MCF 10A (cell line): ENCODE measurements at regions of chr18 and their contacts with region 1.

Region 1: DNA sequence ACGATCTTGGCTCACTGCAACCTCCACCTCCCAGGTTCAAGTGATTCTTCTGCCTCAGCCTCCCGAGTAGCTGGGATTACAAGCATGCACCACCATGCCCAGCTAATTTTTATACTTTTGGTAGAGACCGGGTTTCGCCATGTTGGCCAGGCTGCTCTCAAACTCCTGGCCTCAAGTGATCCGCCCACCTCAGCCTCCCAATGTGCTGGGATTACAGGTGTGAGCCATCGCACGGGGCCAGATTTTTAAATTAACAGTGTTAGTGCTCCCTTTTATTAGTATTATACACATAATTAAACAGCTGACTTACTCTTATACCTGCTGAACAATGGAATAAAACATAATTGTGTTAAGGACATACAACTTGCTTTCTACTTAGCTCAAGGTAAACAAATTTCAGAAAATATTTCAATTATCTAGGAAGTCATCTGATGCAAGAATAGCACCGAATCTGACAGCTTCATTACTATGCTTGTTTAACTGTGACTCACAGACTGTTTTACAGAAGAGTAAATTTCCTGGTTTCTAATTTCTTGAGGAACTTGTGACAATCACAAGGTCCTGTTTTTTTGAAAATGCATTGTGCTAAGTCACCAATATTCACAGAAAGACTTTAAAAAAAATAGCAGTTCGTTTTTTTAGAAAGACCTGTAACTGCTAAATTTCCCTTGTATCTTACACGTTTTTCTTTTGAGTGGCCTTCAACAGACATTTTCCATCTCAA is 51.2 kb downstream of the SPIRE1 start:
- DNase-seq: peak; percentile 69
- H3K4me3 Mint-ChIP-seq: peak overlapping the region; percentile 58
- H3K27ac Mint-ChIP-seq: peak overlapping the region; percentile 99
- H3K4me1 Mint-ChIP-seq: peaks cover 54% of the 10 kb centered on the region
- H3K27me3 Mint-ChIP-seq: no peaks in the 10 kb centered on the region
- CTCF ChIP-seq: no peak

Region 2: DNA sequence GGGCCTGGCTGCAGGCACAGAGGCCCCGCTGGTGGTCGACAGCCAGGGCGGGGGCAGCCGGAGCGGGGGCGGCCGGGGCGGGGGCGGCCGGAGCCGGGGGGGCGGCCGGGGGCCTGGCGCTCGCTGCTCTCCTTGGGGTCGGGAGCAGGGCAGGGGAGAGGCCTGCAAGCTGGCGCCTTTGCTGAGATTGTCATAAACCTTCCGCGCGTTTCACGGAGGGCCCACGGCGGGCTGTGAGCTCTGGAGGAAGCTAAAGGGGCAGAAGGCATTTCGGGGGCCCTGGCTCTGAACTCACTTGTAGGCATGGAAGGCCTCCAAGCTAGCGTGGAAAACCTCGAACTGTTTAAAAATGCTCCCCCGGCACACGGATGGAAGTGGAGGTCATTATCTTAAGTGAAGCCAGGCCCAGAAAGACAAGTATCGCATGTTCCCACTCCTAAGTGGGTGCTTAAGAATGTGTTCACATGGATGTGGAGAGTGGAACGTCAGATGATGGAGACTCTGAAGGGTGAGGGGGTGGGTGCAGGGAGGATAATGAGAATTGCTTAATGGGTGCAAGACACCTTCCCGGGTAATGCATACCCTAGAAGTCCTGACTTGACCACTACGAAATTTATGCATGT is 198.4 kb before region 1 on chr18:
- CTCF ChIA-PET with region 1: interaction called, 5 read pairs
- POLR2A ChIA-PET with region 1: interaction called, 5 read pairs
- intact Hi-C with region 1: loop called (anchors 5 kb)
- DNase-seq: peak; percentile 39
- H3K4me3 Mint-ChIP-seq: peak overlapping the region; percentile 80
- H3K27ac Mint-ChIP-seq: peak overlapping the region; percentile 74
- H3K4me1 Mint-ChIP-seq: peaks cover 20% of the 10 kb centered on the region
- H3K27me3 Mint-ChIP-seq: peaks cover 18% of the 10 kb centered on the region
- CTCF ChIP-seq: no peak

Region 3: DNA sequence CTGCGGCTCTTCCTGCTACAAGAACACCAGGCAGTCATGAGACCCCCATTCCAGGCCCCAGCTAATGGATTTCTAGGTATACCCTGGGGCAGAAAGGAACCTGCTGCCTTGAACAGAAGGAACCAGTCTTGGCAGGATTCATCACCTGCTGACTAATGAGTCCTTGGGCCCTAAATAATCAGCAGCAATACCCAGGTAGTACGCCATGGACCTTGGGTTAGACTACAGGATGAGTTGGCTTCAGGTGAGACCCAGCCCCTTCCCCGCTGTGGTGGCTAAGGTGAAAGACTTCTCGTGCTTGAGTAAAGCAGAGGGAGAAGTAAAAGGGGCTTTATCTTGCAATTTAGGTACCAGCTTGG is 53.9 kb before region 1 on chr18:
- CTCF ChIA-PET with region 1: interaction called, 3 read pairs
- POLR2A ChIA-PET with region 1: interaction called, 40 read pairs
- intact Hi-C with region 1: no loop called
- DNase-seq: peak; percentile 88
- H3K4me3 Mint-ChIP-seq: peak overlapping the region; percentile 12
- H3K27ac Mint-ChIP-seq: peak overlapping the region; percentile 89
- H3K4me1 Mint-ChIP-seq: peaks cover 40% of the 10 kb centered on the region
- H3K27me3 Mint-ChIP-seq: no peaks in the 10 kb centered on the region
- CTCF ChIP-seq: no peak

Region 4: DNA sequence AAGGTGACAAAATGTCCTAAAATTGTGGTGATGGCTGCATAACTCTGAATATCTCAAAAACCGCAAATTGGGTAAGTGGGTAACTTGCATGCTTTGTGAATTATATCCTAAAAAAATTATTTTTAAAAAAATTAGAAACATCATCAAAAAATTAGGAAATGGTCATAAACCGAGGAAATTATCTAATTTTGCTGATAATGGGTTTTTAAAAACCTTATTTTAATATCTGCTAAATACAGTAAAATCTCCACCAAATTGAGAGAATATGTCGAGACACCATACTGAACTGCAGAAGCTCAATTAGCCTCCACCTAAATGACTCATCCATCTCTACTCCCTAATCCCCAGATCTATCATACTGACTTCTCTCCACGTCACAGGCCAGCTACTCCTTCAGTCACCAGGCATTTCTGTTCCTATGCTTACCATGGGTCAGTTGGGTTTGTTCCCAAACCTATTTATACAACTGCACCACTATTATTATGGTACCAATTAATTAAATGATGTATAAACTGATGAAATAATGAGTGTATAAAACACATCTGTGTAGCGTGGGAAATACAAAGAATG is 15.1 kb after region 1 on chr18:
- CTCF ChIA-PET with region 1: interaction called, 3 read pairs
- POLR2A ChIA-PET with region 1: interaction called, 12 read pairs
- intact Hi-C with region 1: no loop called
- DNase-seq: peak; percentile 58
- H3K4me3 Mint-ChIP-seq: no peak overlapping the region
- H3K27ac Mint-ChIP-seq: no peak overlapping the region
- H3K4me1 Mint-ChIP-seq: peaks cover 18% of the 10 kb centered on the region
- H3K27me3 Mint-ChIP-seq: no peaks in the 10 kb centered on the region
- CTCF ChIP-seq: no peak

Region 5: DNA sequence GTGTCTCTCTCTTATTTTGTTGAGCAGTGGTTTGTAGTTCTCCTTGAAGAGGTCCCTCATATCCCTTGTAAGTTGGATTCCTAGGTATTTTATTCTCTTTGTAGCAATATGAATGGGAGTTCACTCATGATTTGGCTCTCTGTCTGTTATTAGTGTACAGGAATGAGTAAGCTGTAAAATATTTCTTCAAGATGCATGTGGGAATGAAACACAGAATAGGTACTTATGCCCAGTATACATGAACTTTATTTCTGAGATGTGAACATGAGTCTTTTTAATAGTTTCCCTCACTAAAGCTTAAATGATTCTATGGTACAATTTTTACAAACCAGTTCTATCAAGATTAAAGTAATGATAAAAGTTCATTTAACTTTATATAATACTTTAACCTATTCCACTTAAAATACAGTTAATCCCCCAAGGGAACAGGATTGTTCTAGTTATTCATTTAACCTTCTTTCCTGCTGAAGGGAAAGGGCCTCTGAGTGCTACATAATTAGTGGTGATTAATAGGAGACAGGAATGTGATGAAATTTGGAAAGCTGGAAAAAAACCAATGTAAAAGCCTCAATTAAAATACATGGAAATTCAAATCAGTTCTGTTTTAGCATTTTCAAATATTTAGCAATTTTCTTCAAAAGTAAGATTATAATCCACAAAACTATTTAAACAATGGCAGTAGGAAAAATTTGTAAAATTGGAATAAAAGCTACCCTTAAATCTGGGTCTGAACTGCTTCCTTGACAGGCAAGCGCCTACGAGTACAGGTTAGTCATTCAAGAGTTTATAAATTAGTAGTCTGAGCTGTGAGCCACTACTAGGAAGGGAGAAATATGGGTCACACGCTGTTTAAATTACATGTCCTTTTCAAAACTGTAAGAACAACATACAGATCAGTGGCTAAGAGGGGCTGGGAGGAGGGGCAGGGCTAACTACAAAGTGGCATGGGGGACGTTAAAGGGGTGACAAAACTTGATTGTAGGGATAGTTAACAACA is 22.2 kb after region 1 on chr18:
- CTCF ChIA-PET with region 1: interaction called, 3 read pairs
- POLR2A ChIA-PET with region 1: interaction called, 44 read pairs
- intact Hi-C with region 1: no loop called
- DNase-seq: peak; percentile 52
- H3K4me3 Mint-ChIP-seq: no peak overlapping the region
- H3K27ac Mint-ChIP-seq: peak overlapping the region; percentile 71
- H3K4me1 Mint-ChIP-seq: peaks cover 26% of the 10 kb centered on the region
- H3K27me3 Mint-ChIP-seq: no peaks in the 10 kb centered on the region
- CTCF ChIP-seq: no peak

Region 6: GRCh38 chr18:12639990-12640880 is 33.5 kb after region 1 on chr18:
- CTCF ChIA-PET with region 1: interaction called, 4 read pairs
- POLR2A ChIA-PET with region 1: interaction called, 52 read pairs
- intact Hi-C with region 1: loop called (anchors 5 kb)
- DNase-seq: peak; percentile 79
- H3K4me3 Mint-ChIP-seq: peak overlapping the region; percentile 36
- H3K27ac Mint-ChIP-seq: peak overlapping the region; percentile 92
- H3K4me1 Mint-ChIP-seq: peaks cover 45% of the 10 kb centered on the region
- H3K27me3 Mint-ChIP-seq: no peaks in the 10 kb centered on the region
- CTCF ChIP-seq: no peak